ENCODE measurements at regions of chr14 and their contacts with region 1.

Region 1: GRCh38 chr14:28751467-28752058 is 15.0 kb upstream of the FOXG1 start:
- DNase-seq: no peak
- ATAC-seq: no peak
- H3K4me3 ChIP-seq: no peak overlapping the region
- H3K4me3 Mint-ChIP-seq: no peak overlapping the region
- H3K27ac ChIP-seq: no peak overlapping the region
- H3K27ac Mint-ChIP-seq: no peak overlapping the region
- H3K4me1 ChIP-seq: no peaks in the 10 kb centered on the region
- H3K4me1 Mint-ChIP-seq: no peaks in the 10 kb centered on the region
- H3K27me3 ChIP-seq: peaks cover 0 to 17% (median 8%) of the 10 kb centered on the region in 4 experiments
- H3K27me3 Mint-ChIP-seq: peaks cover 34% of the 10 kb centered on the region
- CTCF ChIP-seq: no peak

Region 2: GRCh38 chr14:30005114-30005808 is 1253.7 kb after region 1 on chr14:
- CTCF ChIA-PET with region 1: no interaction called
- POLR2A ChIA-PET with region 1: no interaction called
- intact Hi-C with region 1: loop called (anchors 2 kb)
- DNase-seq: peak; percentile 25
- ATAC-seq: no peak
- H3K4me3 ChIP-seq: no peak overlapping the region
- H3K4me3 Mint-ChIP-seq: no peak overlapping the region
- H3K27ac ChIP-seq: no peak overlapping the region
- H3K27ac Mint-ChIP-seq: no peak overlapping the region
- H3K4me1 ChIP-seq: no peaks in the 10 kb centered on the region
- H3K4me1 Mint-ChIP-seq: no peaks in the 10 kb centered on the region
- H3K27me3 ChIP-seq: no peaks in the 10 kb centered on the region
- H3K27me3 Mint-ChIP-seq: no peaks in the 10 kb centered on the region
- CTCF ChIP-seq: peak; percentile 76

Region 3: DNA sequence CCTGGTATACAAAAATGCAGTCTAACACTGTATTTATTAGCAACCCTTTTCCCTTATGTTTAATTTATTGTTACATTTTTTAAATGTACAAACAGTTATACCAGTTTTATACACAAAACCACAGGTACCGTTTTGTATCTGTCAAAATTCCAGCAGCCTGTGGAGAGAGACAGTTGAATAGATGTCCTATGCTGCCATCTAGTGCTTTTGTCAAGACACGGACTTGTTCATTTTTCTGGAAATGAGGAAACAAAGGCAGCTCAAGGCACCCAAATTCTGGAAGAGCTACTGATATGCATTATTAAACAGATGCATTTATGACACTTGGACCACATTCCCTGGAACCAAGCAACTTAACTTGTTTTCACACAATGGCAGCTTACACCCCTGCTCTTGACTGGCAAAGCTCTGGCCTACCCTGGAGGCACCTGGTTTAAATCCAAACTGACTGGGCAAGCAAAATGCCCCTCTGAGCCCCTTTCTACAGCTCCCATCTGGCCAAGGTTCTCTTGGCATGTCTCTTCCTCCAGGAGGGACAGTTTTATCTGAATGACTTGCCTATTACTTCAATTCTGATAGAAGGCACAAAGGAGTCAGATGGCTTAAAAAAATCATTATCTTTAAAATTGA is 1463.0 kb after region 1 on chr14:
- CTCF ChIA-PET with region 1: interaction called, 3 read pairs
- POLR2A ChIA-PET with region 1: no interaction called
- intact Hi-C with region 1: loop called (anchors 2 kb)
- DNase-seq: peak; percentile 6
- ATAC-seq: no peak
- H3K4me3 ChIP-seq: no peak overlapping the region
- H3K4me3 Mint-ChIP-seq: no peak overlapping the region
- H3K27ac ChIP-seq: no peak overlapping the region
- H3K27ac Mint-ChIP-seq: no peak overlapping the region
- H3K4me1 ChIP-seq: no peaks in the 10 kb centered on the region
- H3K4me1 Mint-ChIP-seq: no peaks in the 10 kb centered on the region
- H3K27me3 ChIP-seq: no peaks in the 10 kb centered on the region
- H3K27me3 Mint-ChIP-seq: no peaks in the 10 kb centered on the region
- CTCF ChIP-seq: peak; percentile 35

Region 4: GRCh38 chr14:30270200-30271161 is 1518.9 kb after region 1 on chr14:
- CTCF ChIA-PET with region 1: interaction called, 14 read pairs
- POLR2A ChIA-PET with region 1: no interaction called
- intact Hi-C with region 1: no loop called
- DNase-seq: peak; percentile 51
- ATAC-seq: peak; percentile 64
- H3K4me3 ChIP-seq: no peak overlapping the region
- H3K4me3 Mint-ChIP-seq: no peak overlapping the region
- H3K27ac ChIP-seq: no peak overlapping the region
- H3K27ac Mint-ChIP-seq: no peak overlapping the region
- H3K4me1 ChIP-seq: peaks cover 0 to 3% of the 10 kb centered on the region in 2 donors
- H3K4me1 Mint-ChIP-seq: peaks cover 5% of the 10 kb centered on the region
- H3K27me3 ChIP-seq: no peaks in the 10 kb centered on the region
- H3K27me3 Mint-ChIP-seq: peaks cover 12% of the 10 kb centered on the region
- CTCF ChIP-seq: peak; percentile 77

Region 5: DNA sequence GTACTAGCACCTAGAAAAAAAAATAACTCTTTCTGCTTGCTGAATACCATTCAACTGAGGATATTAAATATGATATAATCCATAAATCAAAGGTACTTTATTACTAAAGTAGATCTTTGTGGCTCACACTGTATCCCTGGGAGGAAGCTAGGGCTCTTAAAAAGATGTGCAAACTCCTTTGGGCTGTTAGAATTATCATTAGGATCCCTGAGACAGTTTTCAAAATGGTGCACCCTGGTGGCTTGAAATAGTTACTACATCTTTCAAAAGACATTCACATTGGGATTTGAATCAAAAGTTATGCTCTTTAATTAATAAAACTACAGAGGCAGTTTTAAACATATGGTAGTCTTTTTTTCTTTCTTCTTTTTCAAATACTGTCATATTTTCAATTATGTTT is 1578.9 kb after region 1 on chr14:
- CTCF ChIA-PET with region 1: interaction called, 3 read pairs
- POLR2A ChIA-PET with region 1: no interaction called
- intact Hi-C with region 1: loop called (anchors 10 kb)
- DNase-seq: no peak
- ATAC-seq: no peak
- H3K4me3 ChIP-seq: no peak overlapping the region
- H3K4me3 Mint-ChIP-seq: no peak overlapping the region
- H3K27ac ChIP-seq: no peak overlapping the region
- H3K27ac Mint-ChIP-seq: no peak overlapping the region
- H3K4me1 ChIP-seq: no peaks in the 10 kb centered on the region
- H3K4me1 Mint-ChIP-seq: no peaks in the 10 kb centered on the region
- H3K27me3 ChIP-seq: no peaks in the 10 kb centered on the region
- H3K27me3 Mint-ChIP-seq: peaks cover 5% of the 10 kb centered on the region
- CTCF ChIP-seq: peak; percentile 58

Region 6: GRCh38 chr14:30521899-30522736 is 1770.6 kb after region 1 on chr14:
- CTCF ChIA-PET with region 1: no interaction called
- POLR2A ChIA-PET with region 1: no interaction called
- intact Hi-C with region 1: loop called (anchors 5 kb)
- DNase-seq: peak; percentile 45
- ATAC-seq: peak; percentile 28
- H3K4me3 ChIP-seq: no peak overlapping the region
- H3K4me3 Mint-ChIP-seq: no peak overlapping the region
- H3K27ac ChIP-seq: no peak overlapping the region
- H3K27ac Mint-ChIP-seq: no peak overlapping the region
- H3K4me1 ChIP-seq: peaks cover 0 to 4% of the 10 kb centered on the region in 2 donors
- H3K4me1 Mint-ChIP-seq: peaks cover 5% of the 10 kb centered on the region
- H3K27me3 ChIP-seq: no peaks in the 10 kb centered on the region
- H3K27me3 Mint-ChIP-seq: peaks cover 4% of the 10 kb centered on the region
- CTCF ChIP-seq: peak; percentile 91

Measured in B cell (primary cell).